ENCODE measurements at regions of chr18 and their contacts with region 1.

Region 1: DNA sequence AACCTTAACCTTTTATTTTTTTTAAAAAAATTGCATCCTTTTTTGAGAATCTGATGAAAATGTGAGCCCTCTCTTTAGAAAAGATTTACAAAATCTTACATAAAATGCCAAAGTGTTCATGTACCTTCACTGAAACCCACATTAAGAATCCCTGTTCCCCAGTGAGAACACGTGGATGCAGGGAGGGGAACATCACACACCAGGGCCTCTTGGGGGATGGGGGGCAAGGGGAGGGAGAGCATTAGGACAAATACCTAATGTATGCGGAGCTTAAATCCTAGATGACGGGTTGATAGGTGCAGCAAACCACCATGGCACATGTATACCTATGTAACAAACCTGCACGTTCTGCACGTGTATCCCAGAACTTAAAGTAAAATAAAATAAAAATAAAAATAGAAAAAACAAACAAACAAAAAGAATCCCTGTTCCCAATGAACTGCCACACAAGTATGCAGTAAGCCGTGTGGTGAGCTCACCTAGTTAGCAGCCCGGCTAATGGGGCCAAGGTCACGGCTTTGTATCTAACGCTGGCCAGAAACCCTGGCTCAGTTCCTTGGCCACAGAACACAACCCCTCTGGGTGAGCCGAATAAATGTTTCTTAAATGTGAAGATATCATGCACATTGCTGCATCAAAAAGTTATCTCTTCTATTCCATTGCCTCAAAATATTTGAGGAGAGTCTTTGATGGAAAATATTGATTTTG is 41.4 kb downstream of the CHST9 start:
- DNase-seq: peak; percentile 60
- ATAC-seq: peak; percentile 93
- H3K4me3 ChIP-seq: peak overlapping the region in 2 of 3 experiments; percentile 42 to 69; a peak in 4 of 6 replicates
- H3K27ac ChIP-seq: no peak overlapping the region
- H3K4me1 ChIP-seq: peaks cover 33% of the 10 kb centered on the region
- H3K27me3 ChIP-seq: no peaks in the 10 kb centered on the region
- CTCF ChIP-seq: no peak
- EP300 ChIP-seq: 0 out of 4 replicates have a peak, but pooled peaks of 1 of the 2 experiments have one; percentile 14
- POLR2A ChIP-seq: no peak
- RAD21 ChIP-seq: no peak

Region 2: DNA sequence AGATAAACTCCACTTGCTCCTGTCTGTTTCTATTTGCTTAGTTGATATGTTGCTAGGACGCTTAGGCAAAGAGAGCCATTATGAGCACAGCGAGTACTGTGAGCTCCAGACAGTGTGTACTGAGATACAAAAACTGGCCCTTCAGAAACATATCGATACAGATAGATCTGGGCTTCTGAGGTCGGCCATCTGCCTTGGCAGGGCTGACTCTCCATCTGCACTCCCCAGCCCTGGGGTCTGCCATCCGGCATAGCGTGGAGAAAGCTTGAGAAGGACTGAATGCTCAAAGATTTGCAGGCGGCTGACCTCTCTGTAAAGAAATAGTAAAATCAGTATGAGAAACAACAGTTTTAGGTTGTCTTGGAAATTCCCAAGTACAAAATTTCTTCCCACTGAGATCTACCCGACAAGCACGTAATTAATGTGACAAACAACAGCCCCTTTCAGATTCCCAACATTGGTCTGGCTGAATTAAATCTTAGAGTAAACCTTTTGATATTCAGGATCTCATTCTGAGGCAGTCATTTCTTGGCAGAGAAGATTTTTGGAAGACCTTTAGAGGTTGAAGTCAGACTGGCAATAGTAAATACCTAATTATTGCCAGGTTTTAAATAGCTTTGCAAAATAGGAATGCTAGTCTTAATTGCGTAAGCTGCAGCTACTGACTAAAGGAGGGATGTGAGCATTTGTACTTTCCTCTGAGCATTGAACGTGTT is 86.1 kb before region 1 on chr18:
- CTCF ChIA-PET with region 1: no interaction called
- POLR2A ChIA-PET with region 1: no interaction called
- in situ Hi-C with region 1: no loop called
- intact Hi-C with region 1: loop called (anchors 2 kb)
- DNase-seq: peak; percentile 65
- ATAC-seq: peak; percentile 90
- H3K4me3 ChIP-seq: no peak overlapping the region
- H3K27ac ChIP-seq: no peak overlapping the region
- H3K4me1 ChIP-seq: peaks cover 34% of the 10 kb centered on the region
- H3K27me3 ChIP-seq: no peaks in the 10 kb centered on the region
- CTCF ChIP-seq: no peak
- EP300 ChIP-seq: no peak
- POLR2A ChIP-seq: no peak
- RAD21 ChIP-seq: no peak

Region 3: GRCh38 chr18:27349284-27349882 is 205.6 kb after region 1 on chr18:
- CTCF ChIA-PET with region 1: no interaction called
- POLR2A ChIA-PET with region 1: no interaction called
- in situ Hi-C with region 1: no loop called
- intact Hi-C with region 1: no loop called
- DNase-seq: no peak
- ATAC-seq: no peak
- H3K4me3 ChIP-seq: no peak overlapping the region
- H3K27ac ChIP-seq: no peak overlapping the region
- H3K4me1 ChIP-seq: no peaks in the 10 kb centered on the region
- H3K27me3 ChIP-seq: no peaks in the 10 kb centered on the region
- CTCF ChIP-seq: no peak
- EP300 ChIP-seq: no peak
- POLR2A ChIP-seq: no peak
- RAD21 ChIP-seq: no peak

Region 4: DNA sequence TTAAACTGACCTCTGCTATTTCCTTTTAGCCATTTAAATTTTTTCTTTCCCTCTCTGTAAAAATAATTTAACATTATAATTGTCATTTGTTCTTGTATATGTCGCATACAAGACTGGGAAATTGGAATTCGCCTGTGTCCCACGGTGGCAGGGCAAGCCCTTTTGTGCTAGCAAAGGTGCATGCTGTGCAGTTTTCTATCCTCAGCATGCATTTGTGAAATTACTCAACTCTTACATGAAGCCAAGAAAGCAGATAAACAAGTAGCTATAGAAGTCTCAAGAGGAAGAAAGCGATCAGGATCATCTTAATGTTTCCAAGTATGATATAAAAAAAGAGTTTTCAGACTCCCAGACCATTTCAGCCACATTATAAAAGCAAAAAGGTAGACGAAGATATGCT is 434.0 kb after region 1 on chr18:
- CTCF ChIA-PET with region 1: no interaction called
- POLR2A ChIA-PET with region 1: no interaction called
- in situ Hi-C with region 1: no loop called
- intact Hi-C with region 1: no loop called
- DNase-seq: no peak
- ATAC-seq: no peak
- H3K4me3 ChIP-seq: no peak overlapping the region
- H3K27ac ChIP-seq: no peak overlapping the region
- H3K4me1 ChIP-seq: no peaks in the 10 kb centered on the region
- H3K27me3 ChIP-seq: no peaks in the 10 kb centered on the region; a peak in 1 of 5 replicates
- CTCF ChIP-seq: no peak
- EP300 ChIP-seq: no peak
- POLR2A ChIP-seq: no peak
- RAD21 ChIP-seq: no peak

Measured in HepG2 (cell line).